H1 (cell line): ENCODE measurements at regions of chr17 and their contacts with region 1.

Region 1: GRCh38 chr17:45812102-45812501 is 28.0 kb downstream of the CRHR1 start:
- DNase-seq: no peak
- H3K4me3 ChIP-seq: no peak overlapping the region
- H3K27ac ChIP-seq: no peak overlapping the region
- H3K4me1 ChIP-seq: peaks cover 0 to 3% (median 0%) of the 10 kb centered on the region in 4 experiments; a peak in 1 of 7 replicates
- H3K27me3 ChIP-seq: no peaks in the 10 kb centered on the region
- CTCF ChIP-seq: peak; percentile 34 to 48 (median 47); a peak in 3 of 4 replicates
- EP300 ChIP-seq: no peak
- POLR2A ChIP-seq: no peak
- RAD21 ChIP-seq: peak; percentile 25 to 45; a peak in 3 of 4 replicates

Region 2: GRCh38 chr17:45677770-45678169 is 134.3 kb before region 1 on chr17:
- CTCF ChIA-PET with region 1: interaction called, 12 read pairs
- POLR2A ChIA-PET with region 1: no interaction called
- DNase-seq: no peak
- H3K4me3 ChIP-seq: no peak overlapping the region
- H3K27ac ChIP-seq: no peak overlapping the region
- H3K4me1 ChIP-seq: peaks cover 0 to 7% (median 2%) of the 10 kb centered on the region in 4 experiments; a peak in 2 of 7 replicates
- H3K27me3 ChIP-seq: no peaks in the 10 kb centered on the region
- CTCF ChIP-seq: no peak
- EP300 ChIP-seq: no peak
- POLR2A ChIP-seq: no peak
- RAD21 ChIP-seq: no peak

Region 3: GRCh38 chr17:45758544-45758943 is 53.6 kb before region 1 on chr17:
- CTCF ChIA-PET with region 1: no interaction called
- POLR2A ChIA-PET with region 1: no interaction called
- DNase-seq: no peak
- H3K4me3 ChIP-seq: no peak overlapping the region
- H3K27ac ChIP-seq: no peak overlapping the region
- H3K4me1 ChIP-seq: peaks cover 0 to 3% (median 0%) of the 10 kb centered on the region in 4 experiments; a peak in 2 of 7 replicates
- H3K27me3 ChIP-seq: peaks cover 0 to 4% (median 1%) of the 10 kb centered on the region in 4 experiments; a peak in 3 of 7 replicates
- CTCF ChIP-seq: no peak
- EP300 ChIP-seq: no peak
- POLR2A ChIP-seq: no peak
- RAD21 ChIP-seq: no peak

Region 4: GRCh38 chr17:45801421-45801820 is 10.7 kb before region 1 on chr17:
- CTCF ChIA-PET with region 1: interaction called, 12 read pairs
- POLR2A ChIA-PET with region 1: no interaction called
- DNase-seq: no peak
- H3K4me3 ChIP-seq: no peak overlapping the region
- H3K27ac ChIP-seq: no peak overlapping the region
- H3K4me1 ChIP-seq: peaks cover 0 to 6% (median 2%) of the 10 kb centered on the region in 4 experiments; a peak in 4 of 7 replicates
- H3K27me3 ChIP-seq: peaks cover 0 to 12% (median 1%) of the 10 kb centered on the region in 4 experiments; a peak in 3 of 7 replicates
- CTCF ChIP-seq: no peak
- EP300 ChIP-seq: no peak
- POLR2A ChIP-seq: no peak
- RAD21 ChIP-seq: no peak